Esophagus muscularis mucosa (tissue), 4 donors: ENCODE measurements at regions of chr13 and their contacts with region 1.

Region 1: GRCh38 chr13:25253687-25254086 is 33.6 kb downstream of the MTMR6 start:
- DNase-seq: no peak
- H3K4me3 ChIP-seq: no peak overlapping the region
- H3K27ac ChIP-seq: no peak overlapping the region
- H3K4me1 ChIP-seq: no peaks in the 10 kb centered on the region
- H3K27me3 ChIP-seq: no peaks in the 10 kb centered on the region
- CTCF ChIP-seq: no peak
- EP300 ChIP-seq: no peak
- POLR2A ChIP-seq: no peak

Region 2: GRCh38 chr13:25329706-25330105 is 76.0 kb after region 1 on chr13:
- intact Hi-C with region 1: loop called (anchors 5 kb)
- DNase-seq: no peak
- H3K4me3 ChIP-seq: no peak overlapping the region
- H3K27ac ChIP-seq: peak overlapping the region in 1 of 4 donors; percentile 13
- H3K4me1 ChIP-seq: peaks cover 0 to 20% (median 0%) of the 10 kb centered on the region in 4 donors
- H3K27me3 ChIP-seq: no peaks in the 10 kb centered on the region
- CTCF ChIP-seq: no peak
- EP300 ChIP-seq: no peak
- POLR2A ChIP-seq: no peak